ENCODE measurements at regions of chr12 and their contacts with region 1.

Region 1: DNA sequence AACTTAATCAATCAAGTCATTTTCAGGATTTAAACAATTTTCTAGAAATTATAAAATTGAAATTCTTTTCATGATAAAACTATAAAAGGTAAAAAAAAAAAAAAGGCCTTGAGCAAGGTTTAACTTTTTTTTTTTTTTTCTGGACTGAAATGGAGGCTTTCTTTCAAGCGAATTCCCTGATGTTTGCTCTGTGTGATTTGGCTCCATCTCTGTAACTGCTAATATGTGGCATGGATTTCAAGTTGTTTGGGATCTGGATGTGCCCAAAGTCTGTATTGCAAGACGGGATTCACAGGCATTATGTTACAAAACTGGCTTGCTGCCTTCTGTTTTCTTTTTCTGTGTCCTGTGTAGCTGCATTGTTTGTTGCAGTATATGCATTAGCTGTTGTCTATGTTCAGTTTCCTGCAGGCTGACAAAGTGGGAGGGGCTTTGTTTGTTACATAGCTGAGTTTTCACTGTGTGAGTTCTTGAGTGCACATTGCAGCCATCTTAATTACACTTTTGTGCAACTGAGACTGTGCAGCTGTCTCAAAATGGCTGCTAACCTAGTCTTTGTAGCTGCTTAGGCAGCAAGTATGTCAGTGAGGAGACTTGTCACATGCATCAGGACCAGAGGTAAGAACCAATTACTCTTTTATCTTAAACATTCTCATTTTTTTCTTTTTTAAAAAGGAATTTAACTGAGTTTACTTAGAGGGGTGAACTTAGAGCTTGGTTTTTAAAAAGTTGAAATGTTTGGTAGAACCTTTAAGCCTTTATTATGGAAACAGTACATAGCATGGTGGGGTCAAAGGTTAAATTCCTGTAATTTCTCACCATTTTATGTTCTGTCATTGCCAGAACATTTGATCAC is 19.5 kb downstream of the ATF7IP start:
- DNase-seq: peak; percentile 90
- ATAC-seq: peak; percentile 96
- H3K4me3 Mint-ChIP-seq: peak overlapping the region; percentile 79
- H3K27ac Mint-ChIP-seq: peak overlapping the region; percentile 98
- H3K4me1 Mint-ChIP-seq: peaks cover 56% of the 10 kb centered on the region
- H3K27me3 Mint-ChIP-seq: no peaks in the 10 kb centered on the region

Region 2: GRCh38 chr12:14225064-14225463 is 159.9 kb before region 1 on chr12:
- CTCF ChIA-PET with region 1: no interaction called
- DNase-seq: no peak
- ATAC-seq: no peak
- H3K4me3 Mint-ChIP-seq: no peak overlapping the region
- H3K27ac Mint-ChIP-seq: no peak overlapping the region
- H3K4me1 Mint-ChIP-seq: peaks cover 9% of the 10 kb centered on the region
- H3K27me3 Mint-ChIP-seq: no peaks in the 10 kb centered on the region

Region 3: GRCh38 chr12:14373217-14373616 is 11.8 kb before region 1 on chr12:
- CTCF ChIA-PET with region 1: interaction called, 61 read pairs
- DNase-seq: no peak
- ATAC-seq: peak; percentile 40
- H3K4me3 Mint-ChIP-seq: peak overlapping the region; percentile 52
- H3K27ac Mint-ChIP-seq: peak overlapping the region; percentile 82
- H3K4me1 Mint-ChIP-seq: peaks cover 56% of the 10 kb centered on the region
- H3K27me3 Mint-ChIP-seq: no peaks in the 10 kb centered on the region

Region 4: GRCh38 chr12:14605401-14605989 is 220.5 kb after region 1 on chr12:
- CTCF ChIA-PET with region 1: no interaction called
- DNase-seq: no peak
- ATAC-seq: no peak
- H3K4me3 Mint-ChIP-seq: no peak overlapping the region
- H3K27ac Mint-ChIP-seq: no peak overlapping the region
- H3K4me1 Mint-ChIP-seq: no peaks in the 10 kb centered on the region
- H3K27me3 Mint-ChIP-seq: peaks cover 11% of the 10 kb centered on the region

Measured in activated CD8-positive, alpha-beta memory T cell treated with anti-CD3 and anti-CD28 coated beads, Interleukin-2, amount 10 ng/mL, durations not matched to agents 7 days and 5 days (primary cell).